Lower leg skin (tissue), 4 donors: ENCODE measurements at regions of chr7 and their contacts with region 1.

Region 1: DNA sequence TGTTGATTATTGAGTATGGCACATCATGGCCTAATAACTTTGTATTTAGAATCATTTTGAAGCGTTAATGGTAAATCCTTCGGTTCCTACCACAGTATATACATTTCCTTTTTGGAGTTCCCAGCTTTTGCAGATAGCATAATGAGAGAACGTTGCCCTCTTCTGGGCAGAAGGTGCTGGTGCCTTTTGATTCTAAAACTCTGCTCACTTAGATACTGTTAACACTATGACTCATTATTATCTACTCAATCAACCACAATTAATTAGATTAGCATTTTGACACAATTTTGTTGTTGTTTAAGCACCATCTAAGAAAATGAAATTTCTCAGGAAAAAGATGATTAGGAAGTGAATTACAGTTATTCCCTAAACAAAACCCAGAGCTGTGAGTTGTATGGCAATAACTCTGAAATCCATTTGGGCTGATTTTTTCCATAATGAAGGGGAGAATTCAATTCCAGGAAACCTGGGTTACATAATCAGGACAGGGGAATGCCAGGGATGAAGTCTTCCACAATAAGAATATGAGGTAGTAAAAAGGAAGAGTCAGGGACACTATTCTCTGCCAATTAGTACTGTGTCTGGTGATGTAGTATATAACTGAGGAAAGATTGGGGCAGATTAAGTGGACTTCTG is 11.5 kb upstream of the DLD start:
- DNase-seq: peak in 1 of 2 donors; percentile 39
- H3K4me3 ChIP-seq: no peak overlapping the region
- CTCF ChIP-seq: no peak
- POLR2A ChIP-seq: no peak

Region 2: GRCh38 chr7:107462740-107463444 is 416.6 kb before region 1 on chr7:
- intact Hi-C with region 1: loop called (anchors 5 kb)
- DNase-seq: peak in 1 of 2 donors; percentile 47
- H3K4me3 ChIP-seq: no peak overlapping the region
- CTCF ChIP-seq: no peak
- POLR2A ChIP-seq: no peak

Region 3: GRCh38 chr7:107743567-107744344 is 135.8 kb before region 1 on chr7 and contains the start of gene CBLL1:
- intact Hi-C with region 1: loop called (anchors 5 kb)
- DNase-seq: peak; percentile 95 to 99
- H3K4me3 ChIP-seq: peak within 1 kb of the TSS; percentile 99
- CTCF ChIP-seq: peak in 1 of 3 donors; percentile 64
- POLR2A ChIP-seq: peak in 1 of 2 donors; percentile 4
- total RNA-seq, gene CBLL1: 32.2 to 66.4 (median 42.6) TPM